ENCODE measurements at regions of chr13 and their contacts with region 1.

Region 1: GRCh38 chr13:20997430-20998161 is 63.8 kb downstream of the LATS2 start:
- DNase-seq: peak; percentile 34 to 79 (median 57)
- ATAC-seq: peak; percentile 63 to 71
- H3K4me3 ChIP-seq: no peak overlapping the region
- H3K27ac ChIP-seq: peak overlapping the region; percentile 61
- H3K4me1 ChIP-seq: peaks cover 15% of the 10 kb centered on the region
- H3K27me3 ChIP-seq: no peaks in the 10 kb centered on the region

Region 2: GRCh38 chr13:21047596-21048283 is 50.1 kb after region 1 on chr13:
- intact Hi-C with region 1: loop called in 2 of 4 experiments (anchors 5 to 10 kb)
- DNase-seq: peak; percentile 46 to 81 (median 79)
- ATAC-seq: peak in 1 of 2 donors; percentile 37
- H3K4me3 ChIP-seq: no peak overlapping the region
- H3K27ac ChIP-seq: no peak overlapping the region
- H3K4me1 ChIP-seq: peaks cover 10% of the 10 kb centered on the region
- H3K27me3 ChIP-seq: no peaks in the 10 kb centered on the region

Region 3: DNA sequence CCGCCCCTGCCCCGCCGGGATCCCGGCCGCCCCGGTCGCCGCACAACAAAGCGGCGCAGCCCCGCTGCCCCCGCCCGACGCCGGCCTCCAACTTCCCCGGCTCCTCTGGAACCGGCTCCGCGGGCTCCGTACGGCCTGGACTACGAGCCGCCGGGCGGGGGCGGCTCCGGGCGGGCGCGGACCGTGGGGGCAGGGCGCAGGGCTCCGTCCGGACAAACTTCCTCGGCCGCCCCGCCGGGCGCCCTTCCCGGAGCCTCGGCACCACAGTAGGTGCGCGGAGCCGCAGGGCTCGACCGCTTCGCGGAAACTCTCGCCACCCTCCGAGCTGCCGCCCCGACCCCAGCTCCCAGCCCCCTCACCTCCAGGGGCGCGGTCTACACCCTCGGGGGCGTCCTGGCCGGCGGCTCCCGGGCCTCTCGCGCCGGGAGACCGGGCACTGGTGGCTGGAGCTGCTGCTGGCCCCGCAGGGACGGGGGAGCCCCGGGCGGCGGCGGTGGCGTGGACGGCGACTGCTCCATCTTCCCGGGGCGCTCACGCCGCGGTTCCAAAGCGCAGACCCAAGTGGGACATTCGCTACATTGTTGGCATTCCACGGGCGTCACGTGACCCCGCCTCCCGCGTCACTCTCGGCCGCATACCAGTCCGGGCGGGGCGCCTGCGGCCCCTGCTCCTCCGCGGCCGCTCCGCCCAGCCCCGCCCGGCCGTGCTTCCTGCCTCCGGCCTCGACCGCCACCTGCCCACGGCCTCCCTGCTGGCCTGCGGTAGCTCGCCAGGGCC is 63.6 kb after region 1 on chr13 and contains the start of gene LATS2:
- intact Hi-C with region 1: loop called in 1 of 4 experiments (anchors 10 kb)
- DNase-seq: peak; percentile 96 to 99 (median 98)
- ATAC-seq: peak; percentile 97 to 98
- H3K4me3 ChIP-seq: peak within 1 kb of the TSS; percentile 91
- H3K27ac ChIP-seq: peak within 1 kb of the TSS; percentile 98
- H3K4me1 ChIP-seq: peaks cover 2% of the 10 kb centered on the region
- H3K27me3 ChIP-seq: no peaks in the 10 kb centered on the region
- total RNA-seq, gene LATS2: 22.1 to 36.7 (median 23.6) TPM

Measured in right cardiac atrium (tissue), 5 donors.